K562 (cell line): ENCODE measurements at regions of chr3 and their contacts with region 1.

Region 1: GRCh38 chr3:110526777-110527727 is 544.6 kb upstream of the NECTIN3 start:
- DNase-seq: peak; percentile 10 to 70 (median 20)
- ATAC-seq: peak; percentile 85
- H3K4me3 ChIP-seq: no peak overlapping the region
- H3K27ac ChIP-seq: peak overlapping the region; percentile 84
- H3K4me1 ChIP-seq: peaks cover 0 to 26% of the 10 kb centered on the region in 2 experiments; a peak in 3 of 5 replicates
- H3K27me3 ChIP-seq: no peaks in the 10 kb centered on the region
- CTCF ChIP-seq: no peak
- EP300 ChIP-seq: no peak
- POLR2A ChIP-seq: no peak
- RAD21 ChIP-seq: no peak

Region 2: DNA sequence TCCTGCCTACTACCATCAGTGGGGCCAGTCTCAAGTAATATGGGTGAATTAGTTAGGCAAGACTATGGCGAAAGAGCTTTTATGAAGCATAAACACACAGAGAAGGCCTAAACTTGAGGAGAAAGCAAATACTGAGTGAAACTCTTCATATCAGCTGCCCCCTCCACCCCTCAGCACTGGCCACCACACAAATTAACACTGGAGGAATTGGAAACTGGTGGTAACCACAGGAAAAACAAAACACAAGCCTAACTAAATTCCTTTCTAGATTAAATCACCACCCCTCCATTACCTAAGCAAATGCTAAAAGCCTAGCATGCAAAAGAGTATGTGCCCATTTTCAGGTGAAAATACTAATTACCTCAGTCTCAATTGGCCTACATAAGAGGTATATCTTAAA is 230.2 kb before region 1 on chr3:
- CTCF ChIA-PET with region 1: no interaction called
- POLR2A ChIA-PET with region 1: no interaction called
- in situ Hi-C with region 1: no loop called
- intact Hi-C with region 1: no loop called
- DNase-seq: no peak
- ATAC-seq: no peak
- H3K4me3 ChIP-seq: no peak overlapping the region
- H3K27ac ChIP-seq: no peak overlapping the region
- H3K4me1 ChIP-seq: no peaks in the 10 kb centered on the region
- H3K27me3 ChIP-seq: no peaks in the 10 kb centered on the region
- CTCF ChIP-seq: no peak
- EP300 ChIP-seq: no peak
- POLR2A ChIP-seq: no peak
- RAD21 ChIP-seq: no peak

Region 3: GRCh38 chr3:110384601-110385000 is 142.5 kb before region 1 on chr3:
- CTCF ChIA-PET with region 1: no interaction called
- POLR2A ChIA-PET with region 1: no interaction called
- in situ Hi-C with region 1: no loop called
- intact Hi-C with region 1: no loop called
- DNase-seq: no peak
- ATAC-seq: no peak
- H3K4me3 ChIP-seq: no peak overlapping the region
- H3K27ac ChIP-seq: no peak overlapping the region
- H3K4me1 ChIP-seq: no peaks in the 10 kb centered on the region
- H3K27me3 ChIP-seq: no peaks in the 10 kb centered on the region
- CTCF ChIP-seq: no peak
- EP300 ChIP-seq: no peak
- POLR2A ChIP-seq: no peak
- RAD21 ChIP-seq: no peak

Region 4: DNA sequence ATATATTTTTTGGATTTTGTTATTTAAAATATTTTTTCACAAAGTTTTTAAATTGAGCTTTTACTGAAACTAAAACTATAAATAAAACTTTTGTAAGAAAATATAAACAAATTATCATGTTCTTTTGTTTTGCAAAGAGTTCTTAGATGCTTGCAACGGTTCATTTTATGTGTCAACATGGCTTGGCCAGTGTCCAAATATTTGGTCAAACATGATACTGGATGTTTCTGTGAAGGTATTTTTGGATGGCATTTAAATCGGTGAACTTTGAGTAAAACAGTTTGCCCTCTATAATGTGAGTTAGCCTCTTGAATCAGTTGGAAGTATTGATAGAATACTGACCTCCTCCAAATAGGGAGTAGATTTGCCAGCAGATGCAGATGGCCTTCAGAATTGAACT is 68.0 kb before region 1 on chr3:
- CTCF ChIA-PET with region 1: no interaction called
- POLR2A ChIA-PET with region 1: no interaction called
- in situ Hi-C with region 1: no loop called
- intact Hi-C with region 1: loop called (anchors 10 kb)
- DNase-seq: no peak
- ATAC-seq: no peak
- H3K4me3 ChIP-seq: no peak overlapping the region
- H3K27ac ChIP-seq: no peak overlapping the region
- H3K4me1 ChIP-seq: no peaks in the 10 kb centered on the region; a peak in 1 of 5 replicates
- H3K27me3 ChIP-seq: no peaks in the 10 kb centered on the region
- CTCF ChIP-seq: no peak
- EP300 ChIP-seq: no peak
- POLR2A ChIP-seq: no peak
- RAD21 ChIP-seq: no peak

Region 5: GRCh38 chr3:110623571-110623970 is 96.5 kb after region 1 on chr3:
- CTCF ChIA-PET with region 1: no interaction called
- POLR2A ChIA-PET with region 1: no interaction called
- in situ Hi-C with region 1: no loop called
- intact Hi-C with region 1: loop called (anchors 10 kb)
- DNase-seq: no peak
- ATAC-seq: no peak
- H3K4me3 ChIP-seq: no peak overlapping the region
- H3K27ac ChIP-seq: no peak overlapping the region
- H3K4me1 ChIP-seq: no peaks in the 10 kb centered on the region; a peak in 1 of 5 replicates
- H3K27me3 ChIP-seq: no peaks in the 10 kb centered on the region
- CTCF ChIP-seq: no peak
- EP300 ChIP-seq: no peak
- POLR2A ChIP-seq: no peak
- RAD21 ChIP-seq: no peak